Activated B cell treated with CpG ODN at 0.5 μM for 24 hours (primary cell): ENCODE measurements at regions of chr4 and their contacts with region 1.

Region 1: DNA sequence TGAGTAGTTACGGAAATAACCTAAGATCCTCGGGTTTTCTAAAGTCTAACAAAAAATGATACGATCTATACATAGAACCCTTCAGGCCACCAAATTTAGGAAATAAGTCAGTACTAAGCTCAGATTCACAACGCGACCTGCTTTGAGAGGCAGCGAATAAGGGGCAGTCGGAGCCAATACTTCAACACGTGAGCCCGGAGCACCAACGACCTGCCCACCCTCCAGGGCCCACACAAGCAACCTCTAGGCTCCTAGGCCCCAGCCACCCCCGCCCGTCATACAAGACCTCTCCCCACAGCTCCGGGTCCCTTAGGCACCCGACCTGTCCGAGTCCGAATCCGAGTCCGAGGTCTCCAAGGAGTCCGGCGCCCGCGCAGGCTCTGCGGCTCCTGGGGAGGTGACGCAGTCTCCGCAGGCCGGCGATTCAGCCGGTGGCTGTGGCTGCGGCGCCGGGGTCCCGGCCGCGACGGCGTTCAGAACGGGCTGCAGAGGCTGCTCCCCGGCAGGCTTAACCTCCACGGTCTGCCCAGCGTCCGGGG is 580 bp downstream of the NAF1 start:
- DNase-seq: peak; percentile 63
- ATAC-seq: peak; percentile 64
- H3K4me3 Mint-ChIP-seq: peak overlapping the region; percentile 91
- H3K27ac Mint-ChIP-seq: peak overlapping the region; percentile 95
- H3K4me1 Mint-ChIP-seq: peaks cover 27% of the 10 kb centered on the region
- H3K27me3 Mint-ChIP-seq: no peaks in the 10 kb centered on the region
- CTCF ChIP-seq: no peak

Region 2: DNA sequence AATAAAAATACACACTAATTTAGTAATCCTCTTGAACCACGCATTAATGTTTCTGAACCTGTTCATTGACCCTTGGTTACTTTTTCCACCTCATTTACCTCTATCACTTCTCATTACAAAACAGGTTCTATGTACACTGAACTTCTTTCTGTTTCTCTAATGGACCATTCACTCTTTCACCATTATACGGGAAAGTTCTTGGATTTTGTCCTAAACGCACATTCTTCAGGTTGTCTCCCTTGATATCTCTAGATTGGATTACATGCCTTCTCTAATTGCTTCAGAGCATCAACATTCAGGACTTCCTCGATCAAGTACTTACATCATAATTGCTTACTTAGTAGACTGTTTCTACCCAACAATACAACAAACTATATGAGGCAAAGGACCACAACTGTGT is 642.9 kb before region 1 on chr4:
- CTCF ChIA-PET with region 1: no interaction called
- POLR2A ChIA-PET with region 1: no interaction called
- intact Hi-C with region 1: no loop called
- DNase-seq: no peak
- ATAC-seq: no peak
- H3K4me3 Mint-ChIP-seq: no peak overlapping the region
- H3K27ac Mint-ChIP-seq: no peak overlapping the region
- H3K4me1 Mint-ChIP-seq: no peaks in the 10 kb centered on the region
- H3K27me3 Mint-ChIP-seq: no peaks in the 10 kb centered on the region
- CTCF ChIP-seq: no peak

Region 3: GRCh38 chr4:163148466-163149336 is 17.4 kb before region 1 on chr4:
- CTCF ChIA-PET with region 1: no interaction called
- POLR2A ChIA-PET with region 1: no interaction called
- intact Hi-C with region 1: loop called (anchors 2 kb)
- DNase-seq: no peak
- ATAC-seq: no peak
- H3K4me3 Mint-ChIP-seq: no peak overlapping the region
- H3K27ac Mint-ChIP-seq: no peak overlapping the region
- H3K4me1 Mint-ChIP-seq: peaks cover 15% of the 10 kb centered on the region
- H3K27me3 Mint-ChIP-seq: no peaks in the 10 kb centered on the region
- CTCF ChIP-seq: no peak